ENCODE measurements at regions of chr1 and their contacts with region 1.

Region 1: DNA sequence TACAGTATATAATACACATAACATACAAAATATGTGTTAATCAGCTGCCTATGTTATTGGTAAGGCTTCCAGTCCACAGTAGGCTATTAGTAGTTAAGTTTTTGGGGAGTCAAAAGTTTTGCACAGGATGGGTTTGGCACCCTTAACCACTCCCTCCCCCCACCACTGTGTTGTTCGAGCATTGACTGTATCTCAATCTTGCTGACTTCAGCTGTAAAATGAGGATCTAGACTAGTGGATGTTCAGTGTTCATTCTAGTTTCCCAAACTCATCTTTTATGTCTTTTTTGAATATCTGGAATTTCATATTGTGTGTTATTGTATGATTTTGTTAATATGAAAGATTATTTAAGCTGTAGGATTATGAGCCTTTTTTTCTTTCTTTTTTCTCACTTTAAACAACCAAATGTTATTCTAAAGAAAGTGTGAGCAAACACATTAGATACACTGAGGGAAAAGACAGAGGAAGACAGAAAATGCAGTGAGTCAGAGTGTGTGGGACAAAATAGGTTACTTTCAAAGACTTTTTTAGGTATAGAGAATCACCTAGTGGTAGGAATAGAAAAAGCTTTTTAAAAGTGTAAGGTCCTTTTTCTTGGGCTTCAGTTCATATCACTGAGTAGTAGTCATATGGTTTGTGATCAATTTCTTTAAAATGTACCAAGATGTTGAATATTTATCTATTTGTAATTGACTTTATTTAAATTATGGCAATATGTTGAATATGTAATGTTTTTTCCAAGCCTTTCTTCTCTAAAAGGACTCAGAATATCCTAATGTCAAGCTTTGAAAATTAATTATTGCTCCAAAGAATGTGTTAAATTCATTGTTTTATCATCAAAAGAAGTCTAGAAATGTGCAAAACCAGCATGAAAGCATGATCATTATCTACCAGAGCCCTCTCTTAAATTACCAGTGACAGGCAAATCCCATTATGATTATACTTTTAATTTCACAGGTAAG is 17.9 kb upstream of the CENPF start:
- DNase-seq: peak; percentile 85
- H3K4me3 Mint-ChIP-seq: no peak overlapping the region
- H3K27ac Mint-ChIP-seq: peak overlapping the region; percentile 49
- H3K4me1 Mint-ChIP-seq: peaks cover 38% of the 10 kb centered on the region
- H3K27me3 Mint-ChIP-seq: no peaks in the 10 kb centered on the region
- CTCF ChIP-seq: peak; percentile 98

Region 2: DNA sequence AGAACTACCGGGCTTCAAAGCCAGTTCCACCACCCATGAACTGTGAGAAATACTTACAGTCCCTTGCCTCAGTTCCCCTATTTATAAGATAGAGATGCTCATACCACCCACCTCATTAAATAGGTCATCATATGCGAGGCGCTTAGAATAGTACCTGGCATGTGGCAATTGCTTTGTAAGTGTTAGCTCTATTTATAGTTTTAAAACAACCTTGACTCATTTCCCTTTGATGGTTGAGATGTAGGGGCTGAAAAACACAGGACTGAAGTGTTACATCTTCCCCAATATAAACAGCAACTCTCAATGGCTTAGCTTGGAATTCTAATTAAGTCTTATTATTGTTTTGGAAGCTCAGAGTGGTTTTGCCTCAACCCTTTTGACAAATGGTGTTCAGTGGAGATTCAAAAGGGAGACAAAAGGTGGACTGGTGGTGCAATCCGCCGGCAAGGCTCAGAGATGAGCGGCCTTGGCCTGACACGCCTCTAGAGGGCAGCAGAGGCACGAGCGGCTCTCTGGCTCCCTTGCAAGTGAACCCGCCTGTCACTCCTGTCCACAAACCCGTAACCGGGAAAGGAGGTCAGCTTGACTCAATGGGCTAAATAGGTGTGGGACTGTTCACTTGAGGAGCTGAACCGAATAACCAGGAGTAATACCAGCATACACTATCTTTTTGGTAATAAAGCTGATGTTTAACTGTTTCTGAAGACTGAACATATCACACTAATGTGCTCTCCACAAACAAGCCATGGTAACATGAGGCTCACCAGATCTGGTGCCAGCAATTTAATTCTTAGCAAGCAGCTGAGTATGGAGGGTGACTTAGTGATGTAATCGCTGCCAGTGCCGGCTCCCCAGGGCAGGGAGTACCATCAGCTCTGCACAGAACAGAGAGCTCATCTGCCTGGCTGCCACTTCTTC is 323.6 kb before region 1 on chr1:
- CTCF ChIA-PET with region 1: interaction called, 85 read pairs
- POLR2A ChIA-PET with region 1: interaction called, 4 read pairs
- intact Hi-C with region 1: loop called (anchors 1 kb)
- DNase-seq: peak; percentile 93
- H3K4me3 Mint-ChIP-seq: no peak overlapping the region
- H3K27ac Mint-ChIP-seq: no peak overlapping the region
- H3K4me1 Mint-ChIP-seq: peaks cover 12% of the 10 kb centered on the region
- H3K27me3 Mint-ChIP-seq: peaks cover 61% of the 10 kb centered on the region
- CTCF ChIP-seq: peak; percentile 100

Region 3: DNA sequence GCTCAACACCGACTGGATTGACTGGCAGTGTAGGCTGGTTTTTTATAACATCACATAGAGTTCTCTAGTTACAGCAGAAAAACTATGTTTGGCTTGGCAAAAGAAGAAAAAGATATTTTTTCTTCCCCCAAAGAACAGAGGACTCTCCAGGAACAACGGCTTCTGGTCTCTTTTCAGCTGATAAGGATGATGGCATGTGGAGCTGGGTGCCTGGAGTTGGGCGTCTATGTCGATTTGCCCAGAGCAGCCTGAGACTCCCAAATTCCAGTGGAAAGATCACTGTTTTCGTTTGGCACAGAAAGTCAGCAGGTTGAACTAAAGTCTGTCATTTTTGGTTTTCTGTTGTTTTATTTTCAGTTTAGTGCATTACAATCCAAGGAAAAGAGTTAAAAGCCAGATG is 213.0 kb before region 1 on chr1:
- CTCF ChIA-PET with region 1: interaction called, 24 read pairs
- POLR2A ChIA-PET with region 1: interaction called, 9 read pairs
- intact Hi-C with region 1: no loop called
- DNase-seq: no peak
- H3K4me3 Mint-ChIP-seq: no peak overlapping the region
- H3K27ac Mint-ChIP-seq: peak overlapping the region; percentile 11
- H3K4me1 Mint-ChIP-seq: peaks cover 6% of the 10 kb centered on the region
- H3K27me3 Mint-ChIP-seq: no peaks in the 10 kb centered on the region
- CTCF ChIP-seq: no peak

Region 4: GRCh38 chr1:214416417-214416816 is 168.7 kb before region 1 on chr1:
- CTCF ChIA-PET with region 1: interaction called, 64 read pairs
- POLR2A ChIA-PET with region 1: interaction called, 54 read pairs
- intact Hi-C with region 1: no loop called
- DNase-seq: peak; percentile 80
- H3K4me3 Mint-ChIP-seq: no peak overlapping the region
- H3K27ac Mint-ChIP-seq: peak overlapping the region; percentile 69
- H3K4me1 Mint-ChIP-seq: peaks cover 67% of the 10 kb centered on the region
- H3K27me3 Mint-ChIP-seq: no peaks in the 10 kb centered on the region
- CTCF ChIP-seq: no peak

Region 5: GRCh38 chr1:214454619-214455396 is 130.3 kb before region 1 on chr1:
- CTCF ChIA-PET with region 1: interaction called, 29 read pairs
- POLR2A ChIA-PET with region 1: interaction called, 27 read pairs
- intact Hi-C with region 1: no loop called
- DNase-seq: peak; percentile 60
- H3K4me3 Mint-ChIP-seq: no peak overlapping the region
- H3K27ac Mint-ChIP-seq: peak overlapping the region; percentile 42
- H3K4me1 Mint-ChIP-seq: peaks cover 66% of the 10 kb centered on the region
- H3K27me3 Mint-ChIP-seq: no peaks in the 10 kb centered on the region
- CTCF ChIP-seq: no peak

Region 6: GRCh38 chr1:214551436-214552173 is 33.5 kb before region 1 on chr1 and contains the start of gene PTPN14:
- CTCF ChIA-PET with region 1: interaction called, 298 read pairs
- POLR2A ChIA-PET with region 1: interaction called, 2,189 read pairs
- intact Hi-C with region 1: loop called (anchors 1 kb)
- DNase-seq: peak; percentile 97
- H3K4me3 Mint-ChIP-seq: peak within 1 kb of the TSS; percentile 89
- H3K27ac Mint-ChIP-seq: peak within 1 kb of the TSS; percentile 90
- H3K4me1 Mint-ChIP-seq: peaks cover 39% of the 10 kb centered on the region
- H3K27me3 Mint-ChIP-seq: no peaks in the 10 kb centered on the region
- CTCF ChIP-seq: peak; percentile 77
- total RNA-seq, gene PTPN14: 240 and 243 TPM in 2 replicates

Region 7: GRCh38 chr1:214632091-214632490 is 47.0 kb after region 1 on chr1:
- CTCF ChIA-PET with region 1: interaction called, 49 read pairs
- POLR2A ChIA-PET with region 1: no interaction called
- intact Hi-C with region 1: no loop called
- DNase-seq: no peak
- H3K4me3 Mint-ChIP-seq: no peak overlapping the region
- H3K27ac Mint-ChIP-seq: peak overlapping the region; percentile 66
- H3K4me1 Mint-ChIP-seq: peaks cover 4% of the 10 kb centered on the region
- H3K27me3 Mint-ChIP-seq: no peaks in the 10 kb centered on the region
- CTCF ChIP-seq: no peak